Heart left ventricle (tissue), 16 donors: ENCODE measurements at regions of chrX and their contacts with region 1.

Region 1: DNA sequence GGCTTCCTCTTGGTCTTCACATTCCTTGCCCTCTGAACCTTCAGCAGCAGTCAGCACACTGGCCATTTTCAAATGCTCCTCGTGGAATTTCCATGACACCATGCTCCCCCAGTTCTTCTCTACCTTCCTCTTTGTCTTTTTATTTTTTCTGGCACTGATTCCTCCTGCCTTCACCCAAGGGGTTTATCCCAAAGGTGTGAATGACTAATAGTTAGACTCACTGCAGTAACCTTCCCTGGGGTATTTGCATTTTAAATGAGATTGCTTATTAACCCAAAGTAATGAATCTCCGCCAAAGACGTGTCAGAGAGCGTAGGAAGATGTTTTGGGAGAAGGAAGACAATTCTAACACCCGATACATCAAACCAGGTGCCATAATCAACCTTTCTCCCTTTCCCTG is 36.2 kb downstream of the CD40LG start:
- DNase-seq: no peak
- ATAC-seq: no peak
- H3K4me3 ChIP-seq: no peak overlapping the region
- H3K27ac ChIP-seq: no peak overlapping the region
- H3K4me1 ChIP-seq: no peaks in the 10 kb centered on the region
- H3K27me3 ChIP-seq: no peaks in the 10 kb centered on the region
- CTCF ChIP-seq: no peak
- POLR2A ChIP-seq: no peak

Region 2: DNA sequence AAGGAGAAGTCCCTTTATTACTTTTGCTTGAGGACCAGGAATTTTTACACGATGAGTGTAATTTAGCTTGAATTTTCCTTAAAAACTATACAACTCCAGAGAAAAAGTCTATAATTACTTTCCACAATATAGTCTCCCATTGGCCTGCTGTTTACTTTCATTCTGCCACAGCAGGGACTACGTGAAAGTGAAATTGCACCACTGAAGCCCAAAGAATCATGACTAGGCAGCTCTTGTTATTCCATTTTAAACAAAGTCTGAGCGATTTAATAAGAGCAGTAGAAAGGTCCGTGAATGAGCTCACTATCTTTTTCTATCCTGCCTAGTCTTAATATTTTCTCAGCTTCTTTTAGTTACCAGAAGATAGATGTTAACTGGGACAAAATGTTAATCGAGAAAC is 314.7 kb before region 1 on chrX:
- intact Hi-C with region 1: no loop called
- DNase-seq: no peak
- ATAC-seq: no peak
- H3K4me3 ChIP-seq: no peak overlapping the region
- H3K27ac ChIP-seq: no peak overlapping the region
- H3K4me1 ChIP-seq: no peaks in the 10 kb centered on the region
- H3K27me3 ChIP-seq: peaks cover 0 to 9% (median 0%) of the 10 kb centered on the region in 9 donors
- CTCF ChIP-seq: no peak
- POLR2A ChIP-seq: no peak

Region 3: GRCh38 chrX:136519070-136519469 is 165.1 kb before region 1 on chrX:
- intact Hi-C with region 1: loop called in 1 of 10 experiments (anchors 5 kb)
- DNase-seq: no peak
- ATAC-seq: no peak
- H3K4me3 ChIP-seq: no peak overlapping the region
- H3K27ac ChIP-seq: no peak overlapping the region
- H3K4me1 ChIP-seq: no peaks in the 10 kb centered on the region
- H3K27me3 ChIP-seq: peaks cover 0 to 10% (median 0%) of the 10 kb centered on the region in 9 donors
- CTCF ChIP-seq: no peak
- POLR2A ChIP-seq: no peak